Uterus (tissue), 4 donors: ENCODE measurements at regions of chr1 and their contacts with region 1.

Region 1: DNA sequence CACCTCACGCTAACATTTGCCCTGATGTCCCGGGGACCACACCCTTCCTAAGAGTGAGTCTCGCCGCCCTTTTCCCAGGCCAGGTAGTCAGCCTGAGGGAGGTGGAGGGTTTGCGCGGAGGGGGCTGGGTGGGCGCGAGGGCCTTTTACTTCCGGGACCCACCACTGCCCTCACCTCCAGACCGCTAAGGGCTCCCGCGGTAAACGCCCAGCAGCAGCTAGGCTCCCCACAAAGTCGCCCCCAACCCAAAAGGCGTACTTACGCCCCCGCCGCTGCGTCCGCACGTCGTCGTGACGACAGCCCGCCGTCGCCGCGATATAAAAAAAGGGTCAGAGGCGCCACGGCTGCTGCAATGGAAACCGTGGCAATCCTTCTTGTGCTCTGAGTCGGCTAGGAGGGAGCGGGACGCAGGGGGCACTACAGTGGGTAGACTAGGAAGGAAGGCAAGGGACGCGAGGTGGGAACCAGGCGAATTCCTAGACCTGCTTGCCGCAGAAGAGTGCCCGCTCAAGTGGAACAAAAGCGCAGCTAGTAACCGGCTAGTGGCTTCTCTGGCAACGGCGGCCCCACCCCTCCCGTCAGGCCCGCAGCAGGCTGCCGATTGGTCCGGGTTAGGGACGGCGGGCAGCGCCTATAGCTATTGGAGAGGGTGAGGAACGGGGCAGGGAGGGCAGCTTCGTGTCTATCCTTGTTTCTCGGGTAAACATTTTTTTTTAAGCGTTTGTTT is at the start of gene ODF2L:
- DNase-seq: peak; percentile 81 to 86
- H3K4me3 ChIP-seq: peak within 1 kb of the TSS; percentile 72 to 97
- H3K27ac ChIP-seq: peak within 1 kb of the TSS; percentile 77 to 80
- H3K4me1 ChIP-seq: no peaks in the 10 kb centered on the region
- H3K27me3 ChIP-seq: no peaks in the 10 kb centered on the region
- CTCF ChIP-seq: no peak
- POLR2A ChIP-seq: peak; percentile 72 to 76
- total RNA-seq, gene ODF2L: 26.5 to 134 (median 56.3) TPM

Region 2: DNA sequence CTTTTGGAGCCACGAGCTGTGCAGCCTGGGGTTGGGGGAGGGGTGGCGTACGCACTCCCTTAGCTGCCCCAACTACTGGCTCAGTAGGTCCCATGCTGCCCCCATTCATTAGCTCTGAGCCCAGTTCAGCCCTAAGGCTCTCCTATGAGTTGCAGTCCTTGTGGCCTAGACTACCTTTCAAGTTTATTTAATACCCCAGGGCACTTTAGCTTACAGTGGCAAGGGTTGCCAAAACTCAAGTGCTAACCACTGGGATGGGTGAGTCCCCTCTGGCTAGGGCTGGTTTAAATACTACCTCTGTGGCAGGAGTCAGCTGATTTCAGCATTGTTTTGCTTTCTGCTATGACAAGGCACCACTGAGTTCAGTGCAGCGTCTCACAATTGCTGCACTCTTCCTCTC is 118.0 kb before region 1 on chr1:
- intact Hi-C with region 1: no loop called
- DNase-seq: no peak
- H3K4me3 ChIP-seq: no peak overlapping the region
- H3K27ac ChIP-seq: no peak overlapping the region
- H3K4me1 ChIP-seq: no peaks in the 10 kb centered on the region
- H3K27me3 ChIP-seq: no peaks in the 10 kb centered on the region
- CTCF ChIP-seq: no peak
- POLR2A ChIP-seq: no peak

Region 3: GRCh38 chr1:86499987-86500593 is 104.2 kb after region 1 on chr1:
- intact Hi-C with region 1: loop called (anchors 10 kb)
- DNase-seq: no peak
- H3K4me3 ChIP-seq: no peak overlapping the region
- H3K27ac ChIP-seq: peak overlapping the region; percentile 90 to 93
- H3K4me1 ChIP-seq: no peaks in the 10 kb centered on the region
- H3K27me3 ChIP-seq: no peaks in the 10 kb centered on the region
- CTCF ChIP-seq: peak; percentile 42 to 56 (median 48)
- POLR2A ChIP-seq: no peak